Dendritic cell treated with granulocyte-macrophage colony-stimulating factor and Interleukin-4, amounts not matched to agents 40 ng/mL and 50 ng/mL, for 4 days (primary cell): ENCODE measurements at regions of chr6 and their contacts with region 1.

Region 1: GRCh38 chr6:43369174-43370022 is at the start of gene ZNF318:
- H3K4me3 Mint-ChIP-seq: peak within 1 kb of the TSS; percentile 84
- H3K27ac Mint-ChIP-seq: peak within 1 kb of the TSS; percentile 90
- H3K4me1 Mint-ChIP-seq: peaks cover 34% of the 10 kb centered on the region
- H3K27me3 Mint-ChIP-seq: peaks cover 2% of the 10 kb centered on the region

Region 2: DNA sequence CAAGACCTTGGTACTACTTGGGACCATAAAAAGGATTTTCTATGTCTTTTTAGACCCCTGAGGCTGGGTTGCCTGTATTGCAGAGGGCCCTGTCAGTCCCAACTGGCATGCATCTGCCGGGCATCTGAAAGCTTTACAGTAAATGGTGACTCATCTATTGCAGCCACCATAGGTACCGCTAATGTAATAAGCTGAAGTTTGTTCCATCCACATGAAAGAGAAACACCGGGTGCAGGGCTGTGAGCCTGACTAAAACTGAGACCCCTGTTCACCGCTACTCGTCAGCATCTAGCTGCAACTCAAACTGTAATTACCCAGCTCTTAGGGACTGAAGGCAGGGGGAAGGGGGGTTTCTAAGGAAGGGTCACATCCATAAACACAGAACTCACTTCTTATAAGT is 967.2 kb before region 1 on chr6:
- intact Hi-C with region 1: no loop called
- H3K4me3 Mint-ChIP-seq: no peak overlapping the region
- H3K27ac Mint-ChIP-seq: peak overlapping the region; percentile 25
- H3K4me1 Mint-ChIP-seq: peaks cover 90% of the 10 kb centered on the region
- H3K27me3 Mint-ChIP-seq: no peaks in the 10 kb centered on the region

Region 3: DNA sequence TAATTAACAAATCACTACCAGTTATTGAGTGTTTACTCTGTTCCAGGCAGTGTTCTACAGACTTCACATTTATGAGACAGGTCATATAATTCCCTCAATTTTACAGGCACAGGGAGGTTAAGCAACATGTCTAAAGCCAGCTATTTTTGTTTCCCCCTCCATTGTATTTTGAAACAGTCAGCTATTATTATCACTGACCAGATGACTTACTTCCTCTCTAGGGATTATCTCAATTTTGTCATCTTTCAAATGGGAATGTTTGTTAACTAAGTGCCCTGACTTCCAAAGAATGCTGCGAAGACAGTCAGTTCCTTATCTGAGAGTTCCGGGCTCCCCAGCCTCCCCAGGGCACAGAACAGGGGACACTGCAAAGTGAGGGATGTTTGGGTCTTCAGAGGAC is 445.7 kb before region 1 on chr6:
- intact Hi-C with region 1: no loop called
- H3K4me3 Mint-ChIP-seq: peak overlapping the region; percentile 34
- H3K27ac Mint-ChIP-seq: peak overlapping the region; percentile 64
- H3K4me1 Mint-ChIP-seq: peaks cover 52% of the 10 kb centered on the region
- H3K27me3 Mint-ChIP-seq: no peaks in the 10 kb centered on the region

Region 4: DNA sequence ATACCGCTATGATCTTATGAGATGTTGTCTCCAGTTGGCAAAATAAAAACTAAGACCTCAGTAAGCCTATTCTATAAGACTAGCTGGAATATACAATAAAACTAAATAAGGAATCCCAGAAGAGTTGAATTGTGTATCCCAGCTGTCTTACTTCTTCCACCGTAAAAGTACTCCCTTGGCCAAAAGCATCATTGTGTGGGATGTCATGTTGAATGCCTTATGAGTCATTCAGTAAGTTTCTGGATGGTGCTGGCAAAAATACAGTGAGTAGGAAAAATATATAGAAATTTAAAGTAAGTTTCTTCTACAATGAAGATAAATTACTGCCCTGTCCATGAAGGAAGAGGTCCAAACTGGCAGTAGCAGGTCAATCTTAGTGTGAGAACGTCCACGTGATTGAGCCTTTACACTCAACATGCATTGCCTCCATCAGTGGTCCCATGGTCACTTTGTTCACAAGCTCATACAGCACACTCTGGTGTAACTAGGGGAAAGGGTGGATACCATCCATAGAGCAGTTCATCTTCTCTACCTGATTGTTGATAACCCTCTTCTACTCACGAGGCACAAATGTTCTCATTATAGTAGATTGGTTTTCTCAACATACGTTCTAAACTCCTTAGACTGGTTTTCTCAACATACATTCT is 13.7 kb after region 1 on chr6:
- intact Hi-C with region 1: loop called (anchors 1 kb)
- H3K4me3 Mint-ChIP-seq: no peak overlapping the region
- H3K27ac Mint-ChIP-seq: peak overlapping the region; percentile 78
- H3K4me1 Mint-ChIP-seq: peaks cover 11% of the 10 kb centered on the region
- H3K27me3 Mint-ChIP-seq: peaks cover 33% of the 10 kb centered on the region

Region 5: DNA sequence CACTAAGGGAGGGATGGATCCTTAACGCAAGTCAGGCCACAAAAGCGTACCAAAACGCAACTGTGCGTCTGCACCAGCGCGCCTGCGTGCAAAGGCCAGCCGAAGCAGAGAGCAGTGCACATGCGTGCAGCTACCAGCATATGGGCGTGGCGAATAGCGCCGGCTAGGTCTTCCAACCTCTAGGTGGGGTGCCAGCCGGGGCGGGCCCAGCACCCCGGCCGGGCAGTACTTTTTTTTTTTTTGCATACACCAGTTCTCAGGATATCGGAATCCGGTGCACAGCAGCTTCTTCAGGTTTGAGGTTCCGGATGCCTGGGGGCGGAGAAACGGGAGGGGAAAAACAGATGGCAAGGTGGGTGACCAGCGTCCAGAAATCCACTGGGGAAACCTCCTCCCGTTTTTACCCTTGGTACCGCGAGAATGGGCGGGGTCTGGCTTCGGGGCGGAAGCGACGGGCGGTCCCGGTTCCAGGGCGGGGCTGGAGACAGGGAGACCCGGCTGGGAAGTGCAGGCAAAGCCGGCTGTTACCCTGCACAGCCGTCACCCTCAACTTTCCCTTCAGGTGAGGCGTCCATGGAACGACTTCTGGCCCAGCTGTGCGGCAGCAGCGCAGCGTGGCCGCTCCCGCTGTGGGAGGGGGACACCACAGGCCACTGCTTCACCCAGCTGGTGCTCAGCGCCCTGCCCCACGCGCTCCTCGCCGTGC is 58.2 kb after region 1 on chr6 and contains the start of gene ABCC10:
- intact Hi-C with region 1: loop called (anchors 1 kb)
- H3K4me3 Mint-ChIP-seq: peak within 1 kb of the TSS; percentile 95
- H3K27ac Mint-ChIP-seq: peak within 1 kb of the TSS; percentile 98
- H3K4me1 Mint-ChIP-seq: peaks cover 16% of the 10 kb centered on the region
- H3K27me3 Mint-ChIP-seq: peaks cover 8% of the 10 kb centered on the region

Region 6: GRCh38 chr6:43506667-43507471 is 137.5 kb after region 1 on chr6:
- intact Hi-C with region 1: loop called (anchors 5 kb)
- H3K4me3 Mint-ChIP-seq: no peak overlapping the region
- H3K27ac Mint-ChIP-seq: no peak overlapping the region
- H3K4me1 Mint-ChIP-seq: peaks cover 38% of the 10 kb centered on the region
- H3K27me3 Mint-ChIP-seq: peaks cover 29% of the 10 kb centered on the region